ENCODE measurements at regions of chr12 and their contacts with region 1.

Region 1: DNA sequence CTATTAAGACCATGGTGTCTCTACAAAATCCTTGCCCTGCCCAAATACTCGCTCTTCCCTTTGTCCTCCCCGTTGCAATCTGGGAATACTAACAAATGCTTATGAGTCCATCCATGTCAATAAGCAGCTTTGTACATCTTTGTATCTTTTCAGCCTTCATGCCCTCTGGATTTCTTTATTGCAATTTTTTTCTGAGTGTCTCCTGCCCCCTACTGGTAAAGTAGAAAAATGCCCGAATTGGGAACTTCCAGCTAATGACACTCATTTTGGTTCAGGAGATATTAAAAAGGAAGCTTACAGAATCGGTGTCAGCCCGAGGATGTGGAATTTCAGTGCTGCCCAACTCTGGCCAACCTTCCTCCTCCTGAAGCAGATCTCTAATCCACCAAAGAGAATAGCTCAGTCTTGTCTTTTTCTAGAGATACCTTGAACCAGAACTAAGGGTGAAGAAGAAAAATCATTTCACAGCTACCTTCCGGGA is 46.0 kb downstream of the SH2B3 start:
- DNase-seq: no peak
- ATAC-seq: peak; percentile 12

Region 2: DNA sequence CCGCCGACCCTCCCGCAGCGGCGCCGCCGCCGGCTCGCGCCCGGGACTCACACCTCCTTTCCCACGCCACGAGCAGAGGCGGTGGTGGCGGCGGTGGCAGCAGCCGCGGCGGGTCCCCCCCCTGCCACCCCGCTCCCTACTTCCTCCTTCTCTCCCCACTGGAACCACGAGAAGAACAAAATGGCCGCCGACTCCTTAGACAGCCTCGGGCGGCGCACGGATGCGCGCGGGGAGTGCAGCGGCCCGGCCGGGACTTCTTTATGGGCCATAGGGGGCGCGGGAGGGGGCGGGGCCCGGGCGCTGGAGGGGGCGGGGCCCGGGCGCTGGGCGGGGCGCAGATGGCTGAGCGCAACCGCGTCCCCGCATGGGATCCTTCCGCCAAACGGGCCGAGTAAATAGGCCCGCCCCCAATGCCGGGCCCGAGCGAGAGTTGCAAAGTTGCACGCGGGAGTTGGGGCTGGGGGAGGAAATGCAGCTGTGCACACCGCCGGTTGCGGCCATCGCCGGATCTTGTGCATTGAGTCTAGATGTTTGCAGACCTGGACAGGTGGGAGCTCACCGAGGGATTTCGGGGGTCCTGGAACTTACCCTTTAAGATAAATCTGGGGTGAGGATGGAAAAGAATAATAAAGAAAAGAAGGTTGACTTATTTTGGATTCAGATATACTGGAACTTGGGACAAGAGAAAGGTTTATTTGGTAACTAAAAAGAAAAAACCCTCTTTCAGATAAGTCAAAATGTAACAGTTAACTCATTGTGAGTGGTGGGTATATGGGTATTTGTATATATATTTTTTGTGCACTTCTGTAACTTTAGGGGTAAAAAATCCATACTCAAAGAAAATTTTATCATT is 708.7 kb before region 1 on chr12 and contains the start of gene PPP1CC:
- intact Hi-C with region 1: loop called (anchors 5 kb)
- DNase-seq: peak; percentile 95
- ATAC-seq: peak; percentile 97
- total RNA-seq, gene PPP1CC: 111 TPM

Region 3: GRCh38 chr12:111396726-111397445 is 54.8 kb before region 1 on chr12:
- intact Hi-C with region 1: loop called (anchors 2 kb)
- DNase-seq: peak; percentile 92
- ATAC-seq: peak; percentile 87